Ascending aorta (tissue), 2 donors: ENCODE measurements at regions of chr10 and their contacts with region 1.

Region 1: DNA sequence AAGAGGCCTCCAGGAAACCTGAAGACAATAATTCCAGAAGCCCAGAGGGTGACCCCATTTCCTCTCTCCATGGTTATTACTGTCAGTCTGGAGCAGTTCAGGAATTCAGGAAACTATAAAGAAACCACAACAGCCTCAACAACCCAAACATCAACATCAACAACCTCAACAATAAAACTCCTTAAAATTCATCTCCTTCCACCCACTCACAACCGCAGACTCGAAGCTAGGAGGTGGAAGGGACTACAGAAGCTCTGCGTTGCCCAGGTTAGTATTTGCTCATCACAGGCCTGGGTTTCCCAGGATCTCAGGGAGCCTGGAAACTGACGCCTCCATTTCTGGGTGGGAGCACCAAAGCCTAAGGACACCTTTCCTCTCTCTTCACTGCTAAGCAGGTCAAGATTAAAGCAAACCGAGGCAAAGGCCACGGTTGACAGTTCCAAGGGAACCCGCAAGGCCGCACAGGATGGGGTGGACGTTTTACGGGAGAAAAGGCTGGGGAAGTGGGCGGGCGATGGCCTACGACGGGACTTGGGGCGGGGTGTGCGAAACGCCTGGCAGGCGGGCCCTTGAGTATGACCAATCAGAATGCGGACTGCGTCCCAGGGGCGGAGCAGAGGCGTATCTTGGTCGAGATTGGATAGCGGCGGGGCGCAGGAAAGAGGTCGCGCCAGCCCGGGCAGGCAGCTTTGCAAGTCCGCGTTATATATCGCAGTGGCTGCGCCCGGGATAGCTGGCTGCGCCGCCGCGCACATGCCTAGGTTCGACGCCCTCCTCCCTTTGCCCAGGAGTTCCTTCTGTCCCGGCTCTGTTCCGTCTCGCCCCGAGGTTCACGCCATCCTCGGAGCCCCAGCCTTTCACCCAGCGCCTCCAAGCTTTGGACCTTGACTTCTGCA is at the start of gene ELOVL3:
- DNase-seq: peak; percentile 72 to 94
- H3K4me3 ChIP-seq: peak within 1 kb of the TSS; percentile 34 to 53
- H3K27ac ChIP-seq: peak within 1 kb of the TSS; percentile 39 to 70
- H3K4me1 ChIP-seq: peaks cover 10 to 21% of the 10 kb centered on the region in 2 donors
- H3K27me3 ChIP-seq: peaks cover 9% of the 10 kb centered on the region
- CTCF ChIP-seq: no peak
- total RNA-seq, gene ELOVL3: not detected

Region 2: GRCh38 chr10:102167861-102168260 is 58.0 kb before region 1 on chr10:
- intact Hi-C with region 1: loop called (anchors 2 kb)
- DNase-seq: no peak
- H3K4me3 ChIP-seq: no peak overlapping the region
- H3K27ac ChIP-seq: no peak overlapping the region
- H3K4me1 ChIP-seq: peaks cover 0 to 2% of the 10 kb centered on the region in 2 donors
- H3K27me3 ChIP-seq: no peaks in the 10 kb centered on the region
- CTCF ChIP-seq: no peak

Region 3: GRCh38 chr10:102245101-102245931 is 19.4 kb after region 1 on chr10 and contains the start of gene GBF1:
- intact Hi-C with region 1: loop called (anchors 2 kb)
- DNase-seq: peak; percentile 89 to 97
- H3K4me3 ChIP-seq: peak within 1 kb of the TSS; percentile 66 to 92
- H3K27ac ChIP-seq: peak within 1 kb of the TSS; percentile 85 to 90
- H3K4me1 ChIP-seq: peaks cover 13 to 30% of the 10 kb centered on the region in 2 donors
- H3K27me3 ChIP-seq: no peaks in the 10 kb centered on the region
- CTCF ChIP-seq: no peak
- total RNA-seq, gene GBF1: 56.0 TPM

Region 4: DNA sequence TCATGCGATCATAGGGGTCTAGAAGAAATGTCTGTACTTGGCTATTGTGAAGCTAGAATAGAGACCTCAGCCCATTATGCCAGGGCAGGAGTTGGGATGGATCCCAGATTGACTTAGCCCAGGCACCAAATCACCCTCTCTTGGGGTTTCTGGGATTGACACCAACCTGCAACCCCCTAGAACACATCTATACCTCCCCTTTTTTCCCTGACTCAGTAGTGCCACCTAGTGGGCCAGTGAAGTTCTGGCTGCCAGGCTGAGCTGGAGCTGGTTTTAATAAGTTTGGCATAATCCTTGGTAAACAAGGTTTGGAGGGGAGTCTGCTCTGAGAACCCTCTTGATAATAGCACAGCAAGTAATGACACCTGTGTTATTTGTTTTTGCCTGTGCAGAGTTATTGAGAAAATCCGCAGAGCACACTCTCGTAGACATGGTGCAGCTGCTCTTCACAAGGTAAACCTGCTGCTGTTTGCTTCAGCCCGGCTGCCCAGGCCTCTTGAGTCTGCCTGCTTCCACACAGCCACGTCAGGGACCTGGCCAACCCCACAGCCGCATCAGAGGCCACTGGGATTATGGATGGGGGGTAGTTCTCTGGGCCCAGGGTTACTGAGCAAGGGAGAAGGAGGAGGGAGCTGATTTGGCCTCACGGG is 126.3 kb after region 1 on chr10:
- intact Hi-C with region 1: loop called (anchors 1 kb)
- DNase-seq: peak in 1 of 2 donors; percentile 69
- H3K4me3 ChIP-seq: no peak overlapping the region
- H3K27ac ChIP-seq: no peak overlapping the region
- H3K4me1 ChIP-seq: no peaks in the 10 kb centered on the region
- H3K27me3 ChIP-seq: no peaks in the 10 kb centered on the region
- CTCF ChIP-seq: peak; percentile 67 to 92 (median 80)

Region 5: DNA sequence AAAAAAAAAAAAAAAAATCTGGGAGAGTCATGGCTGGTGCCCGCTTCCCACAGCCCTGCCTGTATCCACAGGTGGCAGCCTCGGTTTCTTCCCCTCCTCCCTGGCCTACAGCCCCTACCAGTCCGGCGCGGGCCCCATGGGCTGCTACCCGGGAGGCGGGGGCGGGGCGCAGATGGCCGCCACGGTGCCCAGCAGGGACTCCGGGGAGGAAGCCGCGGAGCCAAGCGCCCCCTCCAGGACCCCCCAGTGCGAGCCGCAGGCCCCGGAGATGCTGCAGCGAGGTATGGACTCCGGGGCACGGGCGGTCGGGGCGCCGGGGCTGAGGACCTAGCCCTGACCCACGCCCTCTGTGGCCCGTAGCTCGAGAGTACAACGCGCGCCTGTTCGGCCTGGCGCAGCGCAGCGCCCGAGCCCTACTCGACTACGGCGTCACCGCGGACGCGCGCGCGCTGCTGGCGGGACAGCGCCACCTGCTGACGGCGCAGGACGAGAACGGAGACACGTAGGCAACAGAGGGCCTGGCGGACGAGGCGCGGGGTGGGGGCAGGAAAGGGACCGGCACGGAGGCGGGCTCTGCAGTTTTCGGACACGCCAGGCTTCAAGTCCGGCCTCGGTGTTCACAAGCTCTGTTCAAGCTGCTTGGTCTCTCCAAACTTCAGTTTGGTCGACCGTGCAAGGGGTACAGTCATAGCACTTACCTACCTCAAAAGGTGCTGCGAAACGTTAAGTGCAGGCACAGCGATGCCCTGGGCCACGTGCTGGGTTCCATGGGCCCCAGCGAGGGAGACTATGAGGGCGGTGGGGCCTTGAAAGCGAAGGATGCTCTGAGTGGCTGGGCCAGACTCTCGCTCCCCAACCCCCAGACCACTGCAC is 173.6 kb after region 1 on chr10:
- intact Hi-C with region 1: loop called (anchors 1 kb)
- DNase-seq: peak; percentile 49 to 94
- H3K4me3 ChIP-seq: peak overlapping the region; percentile 57 to 75
- H3K27ac ChIP-seq: peak overlapping the region; percentile 84 to 90
- H3K4me1 ChIP-seq: peaks cover 14 to 24% of the 10 kb centered on the region in 2 donors
- H3K27me3 ChIP-seq: no peaks in the 10 kb centered on the region
- CTCF ChIP-seq: peak; percentile 97

Region 6: DNA sequence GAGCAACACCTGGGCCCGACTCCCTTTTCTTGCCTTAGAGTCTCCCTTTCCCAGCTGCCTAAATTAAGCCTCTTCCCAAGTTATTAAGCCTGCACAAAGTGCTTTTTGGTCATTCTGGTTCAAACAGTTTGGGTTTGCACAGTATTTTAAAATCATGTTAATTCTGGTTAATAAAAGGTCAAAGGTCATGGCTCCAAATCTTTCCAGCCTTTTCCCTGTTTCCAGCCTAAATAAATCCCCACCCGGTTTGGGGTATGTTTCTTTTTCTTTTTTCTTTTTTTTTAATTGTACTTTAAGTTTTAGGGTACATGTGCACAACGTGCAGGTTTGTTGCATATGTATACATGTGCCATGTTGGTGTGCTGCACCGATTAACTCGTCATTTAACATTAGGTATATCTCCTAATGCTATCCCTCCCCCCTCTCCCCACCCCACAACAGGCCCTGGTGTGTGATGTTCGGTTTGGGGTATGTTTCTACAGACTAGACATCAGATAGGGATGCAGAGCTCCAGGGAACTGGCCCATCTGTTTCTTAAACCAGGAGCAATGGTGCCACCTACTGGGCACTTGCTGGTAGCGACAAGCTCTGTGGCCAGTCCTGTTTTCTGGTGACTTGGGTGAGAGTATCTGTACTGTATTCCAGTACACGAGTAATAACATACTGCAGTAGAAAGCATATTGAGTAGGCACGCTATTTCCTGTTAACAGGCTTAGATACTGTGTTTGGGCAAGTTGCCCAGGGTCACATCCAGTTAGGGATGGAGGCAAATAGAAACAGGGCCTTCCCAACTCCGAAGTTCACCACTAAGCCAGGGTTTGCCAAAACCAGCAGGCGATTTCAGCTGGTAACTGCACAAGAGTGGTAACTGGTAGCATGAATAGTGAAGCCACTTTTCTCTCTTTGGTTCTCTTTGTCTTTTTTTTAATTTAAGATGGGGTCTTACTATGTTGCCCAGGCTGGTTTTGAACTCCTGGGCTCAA is 357.8 kb after region 1 on chr10:
- intact Hi-C with region 1: loop called (anchors 10 kb)
- DNase-seq: peak; percentile 34 to 93
- H3K4me3 ChIP-seq: no peak overlapping the region
- H3K27ac ChIP-seq: no peak overlapping the region
- H3K4me1 ChIP-seq: no peaks in the 10 kb centered on the region
- H3K27me3 ChIP-seq: no peaks in the 10 kb centered on the region
- CTCF ChIP-seq: peak; percentile 82 to 90 (median 84)